Right cardiac atrium (tissue), 5 donors: ENCODE measurements at regions of chr1 and their contacts with region 1.

Region 1: DNA sequence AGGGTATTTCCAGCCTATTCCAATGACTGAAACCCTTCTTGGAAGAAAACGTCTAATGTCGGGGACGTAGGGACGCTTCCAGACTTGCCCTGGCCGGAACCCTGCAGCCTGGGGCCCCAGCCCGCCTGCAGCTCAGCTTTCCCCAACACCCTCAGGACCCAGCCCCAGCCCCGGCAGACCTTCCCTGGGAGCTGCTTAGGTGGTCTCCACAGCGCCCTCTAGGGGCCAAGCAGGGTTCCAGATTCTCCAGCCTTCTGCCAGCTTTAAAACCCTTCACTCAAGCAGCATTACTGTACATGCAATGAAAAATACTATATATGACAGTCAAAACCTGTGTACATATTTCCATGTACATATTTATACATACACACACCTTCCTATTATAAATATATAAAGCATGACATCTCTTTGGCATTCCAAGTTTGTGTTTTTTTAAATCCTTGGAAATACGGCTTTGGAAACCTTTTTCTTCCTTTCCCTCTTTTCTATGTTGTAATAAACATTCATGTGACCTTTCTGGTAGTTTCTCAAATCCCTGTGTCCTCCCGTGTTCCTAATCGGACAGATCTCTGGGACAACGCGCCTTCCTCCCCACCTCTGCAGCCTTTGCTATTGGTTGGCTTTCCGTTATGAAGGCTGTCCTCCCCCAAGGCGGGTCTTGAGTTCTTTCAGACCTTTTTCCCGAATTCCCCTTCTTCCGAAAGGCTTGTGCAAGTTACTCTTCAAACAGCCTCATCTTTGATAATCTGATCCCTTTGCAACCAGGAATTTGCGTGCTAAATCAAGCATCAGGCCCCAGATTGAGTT is 60.3 kb downstream of the STUM start:
- DNase-seq: peak; percentile 58 to 85 (median 82)
- ATAC-seq: peak; percentile 44 to 59
- H3K4me3 ChIP-seq: no peak overlapping the region
- H3K27ac ChIP-seq: no peak overlapping the region
- H3K4me1 ChIP-seq: peaks cover 4% of the 10 kb centered on the region
- H3K27me3 ChIP-seq: no peaks in the 10 kb centered on the region

Region 2: DNA sequence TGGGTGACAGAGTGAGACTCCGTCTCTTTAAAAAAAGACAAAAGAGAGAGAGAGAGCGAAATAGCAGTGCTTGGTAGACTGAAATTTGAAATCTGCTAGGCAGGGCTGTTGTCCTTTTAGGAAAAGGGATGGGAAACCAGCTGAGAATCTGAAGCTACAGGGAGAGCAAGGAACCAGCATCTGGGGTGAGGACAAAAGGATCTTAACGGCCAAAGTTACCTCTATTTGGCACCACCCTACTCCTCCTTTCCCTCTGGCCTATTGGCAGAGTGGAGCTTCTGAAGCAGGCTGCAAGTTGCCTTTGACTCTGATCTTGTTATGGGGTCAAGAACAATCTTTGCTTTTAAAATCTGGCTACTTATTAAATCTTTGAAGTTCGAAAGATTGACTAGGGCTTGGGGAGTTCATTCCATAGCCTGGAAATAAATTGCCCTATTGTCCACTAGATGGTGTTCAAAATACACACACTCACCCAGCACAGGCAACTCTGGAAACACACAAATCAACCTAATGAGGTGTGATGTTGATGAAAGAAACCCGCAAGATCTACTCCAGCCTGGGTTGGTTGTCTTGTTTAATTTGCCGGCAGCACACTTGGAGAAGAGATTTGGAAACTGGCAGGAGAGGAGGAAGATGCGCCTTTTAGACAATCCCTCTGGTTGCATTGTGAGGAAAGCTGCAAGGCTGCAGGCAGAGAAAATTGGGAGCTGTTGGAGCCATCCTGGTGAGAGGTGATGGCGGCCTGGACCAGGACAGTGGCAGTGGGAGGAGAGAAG is 184.5 kb before region 1 on chr1:
- intact Hi-C with region 1: loop called in 1 of 4 experiments (anchors 10 kb)
- DNase-seq: no peak
- ATAC-seq: peak; percentile 65 to 79
- H3K4me3 ChIP-seq: no peak overlapping the region
- H3K27ac ChIP-seq: no peak overlapping the region
- H3K4me1 ChIP-seq: no peaks in the 10 kb centered on the region
- H3K27me3 ChIP-seq: no peaks in the 10 kb centered on the region

Region 3: DNA sequence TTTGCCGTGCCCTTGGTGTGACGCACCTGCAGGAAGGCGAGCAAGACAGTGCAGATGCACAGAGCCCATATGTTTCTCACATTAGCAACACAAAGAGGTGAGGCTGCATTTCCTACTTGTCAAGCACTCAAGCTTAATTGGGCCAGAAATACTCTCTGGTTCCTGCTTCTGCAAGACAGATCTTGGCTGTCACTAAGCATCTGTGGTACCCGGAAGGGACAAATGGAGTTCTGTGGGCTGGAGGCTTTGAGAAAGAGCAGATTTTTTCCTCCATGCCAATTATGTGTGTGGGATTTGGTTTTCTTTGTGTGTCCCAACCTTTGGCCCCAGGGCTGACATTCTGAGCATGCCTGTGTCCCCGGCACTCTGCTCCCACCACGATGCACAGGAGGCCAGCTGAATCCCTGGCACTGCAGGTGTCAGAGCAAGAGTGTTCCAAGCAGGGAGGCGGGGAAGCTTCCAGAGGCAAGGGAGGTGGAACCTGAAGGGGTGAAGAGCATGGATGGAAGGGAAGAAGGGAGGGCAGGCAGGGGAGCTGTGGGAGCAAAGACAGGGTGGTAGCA is 112.4 kb before region 1 on chr1:
- intact Hi-C with region 1: no loop called
- DNase-seq: no peak
- ATAC-seq: no peak
- H3K4me3 ChIP-seq: no peak overlapping the region
- H3K27ac ChIP-seq: no peak overlapping the region
- H3K4me1 ChIP-seq: no peaks in the 10 kb centered on the region
- H3K27me3 ChIP-seq: no peaks in the 10 kb centered on the region

Region 4: DNA sequence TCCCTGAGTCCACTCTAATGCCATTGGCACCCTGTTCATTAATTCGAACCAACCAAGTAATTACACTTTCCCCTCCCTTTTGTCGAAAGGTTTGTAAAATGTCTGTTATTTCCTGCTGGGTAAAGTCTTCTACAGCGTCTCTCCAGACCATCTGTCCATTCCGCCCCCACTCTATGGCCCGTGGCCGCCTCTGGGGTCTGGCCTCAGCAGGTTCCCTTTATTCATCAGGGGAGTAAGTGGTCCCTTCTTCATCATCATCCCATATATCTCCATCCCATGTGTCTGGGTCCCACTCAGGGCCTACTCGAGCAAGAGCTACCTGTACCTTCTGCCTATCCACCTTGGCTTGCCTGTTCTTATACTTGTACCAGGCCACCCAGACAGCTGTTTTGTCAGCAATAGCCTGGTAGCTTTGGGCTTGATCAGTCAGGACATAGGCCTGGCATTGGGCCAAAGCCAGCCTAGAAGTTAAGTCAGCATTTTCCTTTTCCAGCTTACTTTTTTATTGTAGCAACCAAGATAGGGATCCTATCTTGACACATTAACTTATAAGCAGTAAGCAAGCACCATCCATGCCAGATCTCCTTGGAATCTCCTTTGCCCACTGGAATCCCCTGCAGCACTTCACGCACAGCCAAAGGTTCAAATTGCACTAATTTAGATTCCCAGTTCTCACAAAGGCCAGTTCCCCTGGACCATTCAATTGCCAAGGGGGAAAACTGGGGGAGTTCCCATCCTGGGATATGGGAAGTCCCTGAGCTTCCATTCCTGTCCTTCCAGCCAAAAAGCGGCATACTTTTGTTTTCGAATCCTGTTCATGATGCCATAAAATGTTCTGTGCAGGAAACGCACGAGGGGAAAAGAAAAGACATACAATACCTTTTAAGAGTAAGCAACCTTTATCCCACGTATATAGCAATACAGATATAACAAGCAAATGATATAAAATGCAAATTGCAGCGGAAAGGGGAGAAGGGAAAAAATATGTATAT is 67.0 kb before region 1 on chr1:
- intact Hi-C with region 1: loop called in 3 of 4 experiments (anchors 5 to 10 kb)
- DNase-seq: peak; percentile 51 to 75 (median 62)
- ATAC-seq: no peak
- H3K4me3 ChIP-seq: no peak overlapping the region
- H3K27ac ChIP-seq: no peak overlapping the region
- H3K4me1 ChIP-seq: peaks cover 12% of the 10 kb centered on the region
- H3K27me3 ChIP-seq: no peaks in the 10 kb centered on the region

Region 5: DNA sequence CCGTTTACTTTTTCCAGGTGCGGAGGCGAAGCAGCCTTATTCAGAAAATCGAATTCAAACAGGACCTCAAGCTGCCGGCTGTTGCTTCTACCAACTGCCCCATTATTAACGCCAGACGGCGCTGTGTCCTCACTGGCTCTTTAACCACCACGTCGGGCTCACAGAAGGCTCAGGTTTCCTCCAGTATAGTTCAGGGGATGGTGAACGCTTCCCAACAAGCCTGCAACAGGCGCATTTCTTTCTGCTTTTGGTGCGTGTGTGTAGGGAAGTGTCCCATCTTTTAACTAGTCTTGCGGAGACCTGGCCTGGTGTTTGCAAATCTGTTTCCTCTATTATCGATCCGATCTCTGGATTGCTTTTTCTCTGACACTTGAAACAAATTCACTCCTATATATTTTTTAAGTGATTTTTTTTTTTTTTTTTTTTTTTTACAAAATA is 61.1 kb before region 1 on chr1:
- intact Hi-C with region 1: loop called (anchors 5 to 10 kb)
- DNase-seq: peak; percentile 81 to 92 (median 87)
- ATAC-seq: peak; percentile 75 to 83
- H3K4me3 ChIP-seq: peak overlapping the region; percentile 74
- H3K27ac ChIP-seq: no peak overlapping the region
- H3K4me1 ChIP-seq: peaks cover 12% of the 10 kb centered on the region
- H3K27me3 ChIP-seq: no peaks in the 10 kb centered on the region

Region 6: DNA sequence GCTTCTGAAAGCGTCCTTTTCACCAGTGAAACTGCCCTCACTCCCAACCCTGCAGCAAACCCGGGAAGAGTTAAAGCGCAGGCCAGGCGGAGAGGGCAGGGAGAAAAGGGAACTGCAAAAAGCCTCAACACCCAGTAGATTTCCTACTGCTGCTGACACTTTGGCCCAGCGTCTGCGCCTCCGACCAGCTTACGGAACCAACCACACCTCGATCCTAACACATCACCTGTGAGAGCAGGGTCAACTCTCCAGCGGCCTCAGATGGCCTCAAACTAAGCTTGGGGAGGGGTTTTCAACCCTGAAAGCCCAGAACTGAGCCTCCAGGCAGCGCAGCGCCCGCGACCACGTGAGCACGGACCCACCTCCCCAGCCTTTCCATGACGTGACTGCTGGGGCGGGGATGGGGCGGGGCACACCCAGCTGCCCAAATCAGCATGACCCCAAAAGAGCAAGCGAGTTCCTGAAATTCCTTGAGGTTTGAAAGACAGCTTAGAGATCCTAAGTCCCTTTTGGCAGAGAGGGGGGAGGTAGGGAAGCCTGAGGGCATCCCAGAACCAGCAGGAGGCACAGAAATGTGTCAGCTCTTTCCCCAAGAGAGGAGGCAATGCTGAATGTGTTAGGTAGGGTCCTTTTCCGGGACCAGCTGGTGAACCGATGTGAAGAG is 71.1 kb after region 1 on chr1:
- intact Hi-C with region 1: no loop called
- DNase-seq: peak; percentile 87 to 95 (median 95)
- ATAC-seq: peak; percentile 90 to 92
- H3K4me3 ChIP-seq: peak overlapping the region; percentile 41
- H3K27ac ChIP-seq: peak overlapping the region; percentile 98
- H3K4me1 ChIP-seq: peaks cover 46% of the 10 kb centered on the region
- H3K27me3 ChIP-seq: no peaks in the 10 kb centered on the region